Activated CD8-positive, alpha-beta memory T cell treated with anti-CD3 and anti-CD28 coated beads, Interleukin-2, amount 10 ng/mL, durations not matched to agents 7 days and 5 days (primary cell): ENCODE measurements at regions of chr1 and their contacts with region 1.

Region 1: GRCh38 chr1:41751804-41752513 is 166.8 kb downstream of the HIVEP3 start:
- DNase-seq: no peak
- ATAC-seq: peak; percentile 5
- H3K4me3 Mint-ChIP-seq: no peak overlapping the region
- H3K27ac Mint-ChIP-seq: peak overlapping the region; percentile 75
- H3K4me1 Mint-ChIP-seq: peaks cover 63% of the 10 kb centered on the region
- H3K27me3 Mint-ChIP-seq: no peaks in the 10 kb centered on the region

Region 2: DNA sequence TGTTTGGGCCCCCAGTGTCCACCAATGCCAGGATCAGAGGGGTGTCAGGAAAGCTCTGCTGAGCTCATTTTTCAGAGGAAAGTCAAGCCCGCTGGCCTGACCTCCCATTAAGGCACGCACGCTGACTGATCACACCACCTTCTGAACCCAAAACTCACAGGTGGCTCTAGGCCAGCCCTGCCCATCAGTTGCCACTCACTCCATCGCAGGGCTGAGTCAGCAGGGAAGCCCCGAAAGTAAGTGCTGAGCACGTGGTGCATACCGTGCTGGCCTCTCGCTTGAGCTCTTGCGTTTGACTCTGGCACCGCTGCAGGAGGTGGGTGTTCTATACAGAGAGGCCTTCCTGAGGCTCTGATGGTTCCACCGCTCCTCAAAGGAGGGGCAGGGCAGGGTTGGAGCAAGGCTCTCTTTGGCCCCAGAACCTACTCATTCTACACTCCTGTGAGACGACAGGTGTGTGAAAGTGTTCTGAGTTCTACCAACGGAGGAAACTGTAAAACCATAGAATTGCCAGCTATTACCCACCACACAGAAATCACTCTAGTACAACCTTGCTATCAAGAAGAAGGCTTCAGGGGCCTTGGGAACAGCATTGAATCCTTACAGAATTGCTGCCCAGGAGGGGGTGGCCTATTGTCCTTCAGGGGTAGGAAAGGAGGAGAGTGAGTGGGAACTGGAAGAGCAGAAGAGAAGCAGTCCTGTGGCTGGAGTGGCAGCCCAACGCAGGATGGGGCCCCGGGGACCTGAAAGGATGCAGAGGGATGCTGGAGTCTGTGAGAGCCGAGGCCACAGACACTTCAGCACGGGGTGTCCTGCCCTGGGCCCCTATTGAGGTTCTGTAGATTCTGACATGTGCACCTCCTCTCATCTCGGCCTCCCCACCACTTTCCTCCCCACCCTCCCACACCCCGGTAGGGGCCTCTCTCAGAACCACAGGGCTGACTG is 52.8 kb before region 1 on chr1:
- CTCF ChIA-PET with region 1: no interaction called
- DNase-seq: peak; percentile 69
- ATAC-seq: peak; percentile 92
- H3K4me3 Mint-ChIP-seq: no peak overlapping the region
- H3K27ac Mint-ChIP-seq: peak overlapping the region; percentile 58
- H3K4me1 Mint-ChIP-seq: peaks cover 28% of the 10 kb centered on the region
- H3K27me3 Mint-ChIP-seq: no peaks in the 10 kb centered on the region

Region 3: GRCh38 chr1:41739061-41739955 is 12.7 kb before region 1 on chr1:
- CTCF ChIA-PET with region 1: interaction called, 23 read pairs
- DNase-seq: peak; percentile 81
- ATAC-seq: peak; percentile 70
- H3K4me3 Mint-ChIP-seq: no peak overlapping the region
- H3K27ac Mint-ChIP-seq: peak overlapping the region; percentile 73
- H3K4me1 Mint-ChIP-seq: peaks cover 47% of the 10 kb centered on the region
- H3K27me3 Mint-ChIP-seq: no peaks in the 10 kb centered on the region

Region 4: GRCh38 chr1:41773144-41773591 is 21.2 kb after region 1 on chr1:
- CTCF ChIA-PET with region 1: no interaction called
- DNase-seq: no peak
- ATAC-seq: no peak
- H3K4me3 Mint-ChIP-seq: no peak overlapping the region
- H3K27ac Mint-ChIP-seq: no peak overlapping the region
- H3K4me1 Mint-ChIP-seq: no peaks in the 10 kb centered on the region
- H3K27me3 Mint-ChIP-seq: no peaks in the 10 kb centered on the region

Region 5: GRCh38 chr1:41819069-41819468 is 67.1 kb after region 1 on chr1:
- CTCF ChIA-PET with region 1: no interaction called
- DNase-seq: no peak
- ATAC-seq: no peak
- H3K4me3 Mint-ChIP-seq: no peak overlapping the region
- H3K27ac Mint-ChIP-seq: no peak overlapping the region
- H3K4me1 Mint-ChIP-seq: peaks cover 13% of the 10 kb centered on the region
- H3K27me3 Mint-ChIP-seq: no peaks in the 10 kb centered on the region